ENCODE measurements at regions of chr11 and their contacts with region 1.

Region 1: DNA sequence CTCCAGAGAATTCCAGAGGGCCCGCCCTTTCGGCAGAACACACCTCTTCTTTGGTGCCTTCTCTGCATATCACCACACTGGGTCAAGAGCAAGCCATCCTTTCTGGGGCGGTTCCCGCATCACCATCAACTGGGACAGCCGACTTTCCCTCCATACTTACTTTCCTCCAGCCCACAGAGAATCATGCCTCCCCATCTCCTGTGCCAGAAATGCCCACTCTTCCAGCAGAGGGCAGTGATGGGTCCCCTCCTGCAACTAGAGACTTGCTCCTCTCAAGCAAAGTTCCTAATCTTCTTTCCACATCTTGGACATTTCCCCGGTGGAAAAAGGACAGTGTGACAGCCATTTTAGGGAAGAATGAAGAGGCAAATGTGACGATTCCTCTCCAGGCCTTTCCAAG is 157.7 kb downstream of the C11orf91 start:
- DNase-seq: peak; percentile 11 to 39
- ATAC-seq: peak in 1 of 2 donors; percentile 51
- H3K4me3 ChIP-seq: no peak overlapping the region
- H3K27ac ChIP-seq: no peak overlapping the region
- H3K4me1 ChIP-seq: no peaks in the 10 kb centered on the region
- H3K27me3 ChIP-seq: no peaks in the 10 kb centered on the region
- CTCF ChIP-seq: peak; percentile 38 to 63 (median 50)
- POLR2A ChIP-seq: no peak

Region 2: DNA sequence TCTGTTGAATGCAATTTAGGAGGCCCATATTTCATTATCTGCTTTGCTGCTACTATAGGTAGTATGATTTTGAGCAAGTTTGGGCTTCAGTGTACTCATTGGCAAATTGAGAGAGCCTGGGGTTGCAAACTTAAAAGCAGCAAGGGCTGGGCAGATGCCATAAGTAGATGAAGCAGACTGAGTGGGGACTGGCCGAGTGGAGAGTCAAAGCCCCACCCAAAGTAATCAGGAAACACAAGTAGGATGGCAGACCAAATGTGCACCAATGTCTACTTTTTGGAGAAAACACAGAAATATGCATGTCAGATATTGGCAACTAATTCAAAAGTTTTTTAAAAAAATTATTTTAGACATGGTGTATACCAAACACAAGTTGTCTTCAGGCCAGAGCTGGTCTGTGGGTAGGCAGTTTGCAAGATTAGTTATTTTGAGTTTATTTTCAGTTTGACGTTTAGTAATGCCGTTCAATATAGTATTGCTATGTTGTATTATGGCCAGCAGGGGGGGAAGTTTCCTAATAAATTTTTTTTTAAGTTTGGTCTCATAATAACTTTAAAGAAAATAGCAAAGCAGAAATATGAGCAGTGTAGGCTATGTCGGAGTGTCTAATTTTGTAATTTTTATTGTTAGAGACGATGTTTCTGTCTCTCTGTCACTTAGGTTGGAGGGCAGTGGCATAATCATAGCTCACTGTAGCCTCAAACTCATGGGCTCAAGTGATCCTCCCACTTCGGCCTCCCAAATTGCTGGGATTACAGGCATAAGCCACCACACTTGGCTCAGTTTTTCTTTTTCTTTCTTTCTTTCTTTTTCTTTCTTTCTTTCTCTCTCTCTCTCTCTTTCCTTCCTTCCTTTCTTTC is 180.6 kb before region 1 on chr11:
- in situ Hi-C with region 1: no loop called
- intact Hi-C with region 1: loop called (anchors 10 kb)
- DNase-seq: no peak
- ATAC-seq: peak; percentile 60 to 67
- H3K4me3 ChIP-seq: no peak overlapping the region
- H3K27ac ChIP-seq: no peak overlapping the region
- H3K4me1 ChIP-seq: peaks cover 0 to 3% of the 10 kb centered on the region in 2 donors
- H3K27me3 ChIP-seq: no peaks in the 10 kb centered on the region
- CTCF ChIP-seq: peak; percentile 56 to 78 (median 63)
- POLR2A ChIP-seq: no peak

Region 3: DNA sequence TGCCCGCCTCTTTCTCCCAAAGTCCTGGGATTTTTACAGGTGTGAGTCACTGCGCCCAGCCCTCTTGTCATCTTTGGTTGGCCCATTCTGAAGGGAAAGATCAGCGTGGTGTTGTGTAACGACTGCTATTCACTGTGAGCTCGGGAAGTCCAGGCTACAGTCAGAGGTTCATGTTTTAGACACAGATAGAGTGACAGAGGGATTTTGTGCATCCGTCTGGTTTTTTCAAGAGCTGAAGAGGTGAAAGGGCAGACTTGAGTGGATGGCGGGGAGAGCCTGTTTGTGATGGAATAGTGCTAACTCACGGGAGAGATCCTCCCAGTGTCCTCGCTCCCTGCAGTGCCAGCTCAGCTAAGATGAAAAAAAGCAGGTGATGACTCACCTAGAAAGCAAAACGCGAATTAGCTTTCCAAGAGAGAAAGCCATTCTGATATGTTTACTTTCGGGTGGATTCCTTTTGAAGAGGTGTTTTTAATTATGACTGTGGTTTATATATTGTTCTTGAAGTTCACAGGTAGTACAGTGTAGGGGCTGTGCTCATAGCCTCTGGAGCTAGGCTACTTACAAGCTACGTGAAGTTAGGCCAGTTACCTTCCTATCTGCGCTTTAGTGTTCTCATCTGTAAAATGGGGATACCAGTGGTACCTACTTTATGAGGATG is 90.5 kb after region 1 on chr11:
- in situ Hi-C with region 1: no loop called
- intact Hi-C with region 1: no loop called
- DNase-seq: no peak
- ATAC-seq: no peak
- H3K4me3 ChIP-seq: no peak overlapping the region
- H3K27ac ChIP-seq: no peak overlapping the region
- H3K4me1 ChIP-seq: no peaks in the 10 kb centered on the region
- H3K27me3 ChIP-seq: no peaks in the 10 kb centered on the region
- CTCF ChIP-seq: no peak
- POLR2A ChIP-seq: no peak

Region 4: DNA sequence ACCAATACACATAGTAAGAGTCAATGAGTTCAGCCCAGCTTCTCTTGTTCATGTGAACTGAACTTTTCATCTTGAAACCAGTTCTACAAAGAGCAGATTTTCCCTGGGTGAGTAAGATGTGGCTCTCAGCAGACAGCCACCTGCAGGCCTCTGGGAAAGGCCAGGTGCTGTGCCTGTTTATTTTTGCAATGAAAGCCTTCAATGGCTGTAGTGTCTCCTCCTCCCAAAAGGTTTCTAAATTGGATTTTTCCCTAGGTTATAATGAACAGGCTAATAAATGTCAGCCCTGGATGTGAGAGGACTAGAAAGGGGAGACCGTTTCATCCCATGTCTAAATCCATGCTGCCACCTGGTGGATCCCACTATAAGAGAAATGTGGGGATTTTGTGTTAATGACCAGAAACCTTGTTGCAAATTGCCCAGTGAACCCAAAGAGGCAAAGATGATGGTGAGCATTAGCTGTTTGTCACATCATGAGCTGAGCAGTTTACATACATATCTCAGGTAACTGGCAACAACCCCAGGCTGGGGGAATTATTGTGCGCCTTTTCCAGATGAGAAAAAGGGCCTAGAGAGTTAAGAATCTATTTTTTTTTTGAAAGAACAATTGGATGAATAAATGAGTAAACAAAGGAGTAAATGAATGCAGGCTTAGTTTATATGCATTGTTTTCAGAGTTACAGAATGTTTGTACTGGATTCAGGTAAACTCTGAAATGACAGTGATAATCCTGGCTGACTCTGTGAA is 145.0 kb after region 1 on chr11:
- in situ Hi-C with region 1: no loop called
- intact Hi-C with region 1: loop called (anchors 2 kb)
- DNase-seq: no peak
- ATAC-seq: no peak
- H3K4me3 ChIP-seq: no peak overlapping the region
- H3K27ac ChIP-seq: peak overlapping the region in 1 of 4 donors; percentile 78
- H3K4me1 ChIP-seq: peaks cover 21 to 37% of the 10 kb centered on the region in 2 donors
- H3K27me3 ChIP-seq: no peaks in the 10 kb centered on the region
- CTCF ChIP-seq: peak; percentile 38 to 68 (median 60)
- POLR2A ChIP-seq: no peak

Region 5: DNA sequence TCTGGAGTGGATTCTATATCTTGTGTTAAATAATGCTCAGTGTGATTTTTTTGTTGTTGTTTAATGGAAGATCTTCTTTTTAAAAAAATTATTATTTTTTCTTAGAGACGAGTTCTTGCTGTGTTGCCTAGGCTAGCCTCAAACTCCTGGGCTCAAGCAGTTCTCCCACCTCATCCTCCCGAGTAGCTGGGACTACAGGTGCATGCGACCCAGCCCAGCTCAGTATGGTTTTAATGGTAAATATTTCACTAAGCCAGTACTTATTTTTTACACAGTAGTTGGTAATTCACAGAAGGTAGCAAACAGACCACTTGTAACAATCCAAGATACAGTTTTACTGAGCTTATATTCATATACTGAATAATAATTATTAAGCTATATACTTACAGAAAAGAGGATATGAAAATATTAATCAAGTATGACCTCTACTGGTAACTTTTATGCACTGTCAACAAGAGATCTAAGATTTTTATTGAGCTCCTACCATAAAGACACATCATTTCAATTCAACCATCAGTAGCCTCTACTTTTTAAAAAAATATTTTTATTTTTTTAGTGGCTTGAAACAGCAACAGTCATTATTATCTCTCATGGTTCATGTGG is 199.4 kb after region 1 on chr11:
- in situ Hi-C with region 1: loop called in 2 of 4 experiments (anchors 10 kb)
- intact Hi-C with region 1: loop called (anchors 5 kb)
- DNase-seq: no peak
- ATAC-seq: peak; percentile 50 to 74
- H3K4me3 ChIP-seq: no peak overlapping the region
- H3K27ac ChIP-seq: peak overlapping the region in 3 of 4 donors; percentile 1 to 57 (median 39)
- H3K4me1 ChIP-seq: peaks cover 10 to 13% of the 10 kb centered on the region in 2 donors
- H3K27me3 ChIP-seq: no peaks in the 10 kb centered on the region
- CTCF ChIP-seq: peak in 4 of 5 experiments; percentile 47 to 72 (median 56)
- POLR2A ChIP-seq: no peak

Region 6: DNA sequence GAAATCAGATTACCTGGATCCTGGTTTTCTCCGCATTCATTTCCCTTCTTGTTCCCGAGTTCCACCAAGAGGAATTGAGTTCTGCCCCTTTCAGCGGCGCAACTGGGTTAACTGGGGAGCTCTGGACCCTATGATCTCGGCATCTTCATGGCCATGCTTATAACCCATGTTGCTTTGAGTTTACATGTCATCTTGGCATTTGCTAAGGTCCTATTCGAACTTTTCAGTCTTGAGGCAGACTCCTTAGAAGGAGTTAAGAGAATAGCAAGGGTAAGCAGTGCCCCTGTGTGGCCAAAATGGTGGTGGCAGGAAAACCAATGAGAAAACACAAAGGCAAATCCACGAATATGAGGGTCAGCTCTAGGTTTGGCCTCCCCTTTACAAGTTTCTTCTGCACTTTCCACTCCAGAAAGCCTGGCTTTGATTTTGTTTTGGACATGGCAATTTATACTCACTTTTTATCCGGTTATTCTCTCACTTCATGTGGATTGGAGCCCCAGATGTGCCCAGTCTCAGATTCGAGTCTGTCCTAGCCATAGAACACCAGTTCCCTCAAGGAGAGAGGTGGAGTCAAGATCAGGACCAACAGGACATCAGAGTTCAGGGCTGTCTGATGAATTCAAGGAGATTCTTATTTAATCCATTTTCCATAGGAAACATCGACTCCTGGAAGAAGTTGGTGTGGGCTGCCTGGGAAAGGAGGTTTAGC is 286.7 kb after region 1 on chr11:
- in situ Hi-C with region 1: no loop called
- intact Hi-C with region 1: loop called (anchors 10 kb)
- DNase-seq: peak in 1 of 2 donors; percentile 44
- ATAC-seq: peak; percentile 91 to 96
- H3K4me3 ChIP-seq: peak overlapping the region; percentile 48 to 69 (median 54)
- H3K27ac ChIP-seq: no peak overlapping the region
- H3K4me1 ChIP-seq: peaks cover 6 to 9% of the 10 kb centered on the region in 2 donors
- H3K27me3 ChIP-seq: peaks cover 12 to 18% (median 15%) of the 10 kb centered on the region in 3 donors
- CTCF ChIP-seq: peak; percentile 55 to 80 (median 73)
- POLR2A ChIP-seq: no peak

Measured in gastrocnemius medialis (tissue), 4 donors.